ENCODE measurements at regions of chr18 and their contacts with region 1.

Region 1: GRCh38 chr18:62784966-62785413 is 69.6 kb downstream of the PHLPP1 start:
- DNase-seq: no peak
- H3K4me3 ChIP-seq: no peak overlapping the region
- H3K27ac ChIP-seq: peak overlapping the region; percentile 10 to 24 (median 18)
- H3K4me1 ChIP-seq: peaks cover 14 to 59% (median 29%) of the 10 kb centered on the region in 4 donors
- H3K27me3 ChIP-seq: no peaks in the 10 kb centered on the region
- CTCF ChIP-seq: no peak
- EP300 ChIP-seq: no peak
- POLR2A ChIP-seq: no peak

Region 2: GRCh38 chr18:63074981-63075404 is 290.0 kb after region 1 on chr18:
- in situ Hi-C with region 1: no loop called
- intact Hi-C with region 1: loop called (anchors 5 kb)
- DNase-seq: peak; percentile 79
- H3K4me3 ChIP-seq: peak overlapping the region; percentile 22 to 58 (median 41)
- H3K27ac ChIP-seq: peak overlapping the region; percentile 67 to 88 (median 82)
- H3K4me1 ChIP-seq: peaks cover 0 to 26% (median 2%) of the 10 kb centered on the region in 4 donors
- H3K27me3 ChIP-seq: no peaks in the 10 kb centered on the region
- CTCF ChIP-seq: no peak
- EP300 ChIP-seq: no peak
- POLR2A ChIP-seq: peak; percentile 30

Measured in transverse colon (tissue), 4 donors.